ENCODE measurements at regions of chr4 and their contacts with region 1.

Region 1: DNA sequence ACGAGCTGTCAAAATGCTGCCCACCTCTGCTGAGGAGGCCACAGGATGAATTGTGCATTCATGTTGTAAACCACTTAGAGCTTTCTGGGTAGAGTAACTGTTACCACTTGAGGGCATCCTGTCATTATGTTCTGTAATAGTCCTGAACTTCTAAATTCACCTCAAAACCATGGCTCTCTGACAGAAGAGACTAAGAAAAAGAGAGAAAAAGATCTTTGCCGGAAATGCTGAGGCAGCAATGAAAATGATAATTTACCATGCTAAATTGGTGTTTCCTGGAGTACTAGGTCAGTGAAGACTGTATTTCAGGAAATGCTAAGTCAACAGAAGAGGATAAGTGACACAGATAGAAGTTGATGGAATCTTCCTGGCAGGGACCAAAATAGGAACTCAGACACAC is 942.3 kb upstream of the SLIT2 start:
- DNase-seq: peak; percentile 52
- ATAC-seq: peak; percentile 77
- H3K4me3 ChIP-seq: no peak overlapping the region
- H3K27ac ChIP-seq: no peak overlapping the region
- H3K4me1 ChIP-seq: peaks cover 28% of the 10 kb centered on the region
- H3K27me3 ChIP-seq: no peaks in the 10 kb centered on the region
- CTCF ChIP-seq: peak; percentile 60

Region 2: GRCh38 chr4:19382993-19383756 is 73.8 kb after region 1 on chr4:
- CTCF ChIA-PET with region 1: no interaction called
- POLR2A ChIA-PET with region 1: no interaction called
- intact Hi-C with region 1: loop called (anchors 5 kb)
- DNase-seq: peak; percentile 55
- ATAC-seq: no peak
- H3K4me3 ChIP-seq: no peak overlapping the region
- H3K27ac ChIP-seq: no peak overlapping the region
- H3K4me1 ChIP-seq: peaks cover 44% of the 10 kb centered on the region
- H3K27me3 ChIP-seq: no peaks in the 10 kb centered on the region
- CTCF ChIP-seq: no peak

Region 3: GRCh38 chr4:19455213-19455612 is 145.8 kb after region 1 on chr4:
- CTCF ChIA-PET with region 1: no interaction called
- POLR2A ChIA-PET with region 1: no interaction called
- intact Hi-C with region 1: loop called (anchors 5 kb)
- DNase-seq: peak; percentile 72
- ATAC-seq: peak; percentile 37
- H3K4me3 ChIP-seq: peak overlapping the region; percentile 97
- H3K27ac ChIP-seq: peak overlapping the region; percentile 61
- H3K4me1 ChIP-seq: peaks cover 11% of the 10 kb centered on the region
- H3K27me3 ChIP-seq: no peaks in the 10 kb centered on the region
- CTCF ChIP-seq: no peak

Region 4: DNA sequence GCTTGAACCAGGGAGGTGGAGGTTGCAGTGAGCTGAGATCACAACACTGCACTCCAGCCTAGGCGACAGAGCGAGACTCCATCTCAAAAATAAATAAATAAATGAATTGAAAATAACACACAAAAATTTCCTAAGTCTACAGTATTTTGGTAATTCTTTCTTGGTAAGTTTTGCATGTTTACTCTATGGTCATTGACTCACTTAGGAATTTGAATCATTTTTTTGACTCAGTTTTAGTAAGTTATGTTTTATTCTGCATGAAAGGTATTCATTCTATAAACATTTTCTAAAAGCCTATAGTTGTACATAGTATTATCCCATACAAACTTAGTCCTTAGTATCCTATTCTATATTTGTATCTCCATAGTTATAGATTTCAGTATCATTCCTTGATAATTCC is 169.4 kb after region 1 on chr4:
- CTCF ChIA-PET with region 1: no interaction called
- POLR2A ChIA-PET with region 1: no interaction called
- intact Hi-C with region 1: loop called (anchors 5 kb)
- DNase-seq: peak; percentile 53
- ATAC-seq: peak; percentile 81
- H3K4me3 ChIP-seq: no peak overlapping the region
- H3K27ac ChIP-seq: no peak overlapping the region
- H3K4me1 ChIP-seq: peaks cover 9% of the 10 kb centered on the region
- H3K27me3 ChIP-seq: no peaks in the 10 kb centered on the region
- CTCF ChIP-seq: no peak

Measured in PC-3 (cell line).